HepG2 (cell line): ENCODE measurements at regions of chr18 and their contacts with region 1.

Region 1: GRCh38 chr18:31241900-31242409 is 76.0 kb upstream of the DSG1 start:
- DNase-seq: peak; percentile 98
- ATAC-seq: peak; percentile 86
- H3K4me3 ChIP-seq: no peak overlapping the region
- H3K27ac ChIP-seq: peak overlapping the region; percentile 94
- H3K4me1 ChIP-seq: peaks cover 61% of the 10 kb centered on the region
- H3K27me3 ChIP-seq: no peaks in the 10 kb centered on the region
- CTCF ChIP-seq: peak; percentile 82
- EP300 ChIP-seq: peak; percentile 29 to 94; a peak in 2 of 4 replicates
- POLR2A ChIP-seq: no peak
- RAD21 ChIP-seq: peak; percentile 80

Region 2: DNA sequence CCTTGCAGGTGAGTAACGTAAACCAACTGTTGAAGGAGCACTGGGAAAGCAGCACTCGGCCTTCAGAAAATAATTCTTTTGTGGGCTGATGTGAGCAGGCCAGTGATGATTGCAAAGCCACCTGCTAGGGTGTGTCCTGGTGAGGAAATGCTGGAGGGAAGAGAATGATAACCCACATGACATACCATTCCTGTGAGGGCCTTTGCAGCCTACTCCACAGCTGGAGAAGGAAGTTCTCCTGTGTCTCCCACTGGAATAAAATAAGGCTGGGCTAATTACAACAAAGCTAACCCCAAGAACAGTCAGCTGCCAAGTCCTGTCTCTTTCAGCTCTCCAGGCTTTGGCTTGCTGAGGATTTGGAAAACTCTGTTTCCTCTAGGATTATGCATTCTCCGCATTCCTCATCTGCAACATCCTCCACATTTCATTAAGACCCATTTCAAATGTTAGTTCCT is 59.3 kb after region 1 on chr18:
- CTCF ChIA-PET with region 1: no interaction called
- POLR2A ChIA-PET with region 1: no interaction called
- in situ Hi-C with region 1: no loop called
- intact Hi-C with region 1: no loop called
- DNase-seq: no peak
- ATAC-seq: no peak
- H3K4me3 ChIP-seq: no peak overlapping the region
- H3K27ac ChIP-seq: no peak overlapping the region
- H3K4me1 ChIP-seq: no peaks in the 10 kb centered on the region
- H3K27me3 ChIP-seq: no peaks in the 10 kb centered on the region
- CTCF ChIP-seq: no peak
- EP300 ChIP-seq: no peak
- POLR2A ChIP-seq: no peak
- RAD21 ChIP-seq: no peak

Region 3: DNA sequence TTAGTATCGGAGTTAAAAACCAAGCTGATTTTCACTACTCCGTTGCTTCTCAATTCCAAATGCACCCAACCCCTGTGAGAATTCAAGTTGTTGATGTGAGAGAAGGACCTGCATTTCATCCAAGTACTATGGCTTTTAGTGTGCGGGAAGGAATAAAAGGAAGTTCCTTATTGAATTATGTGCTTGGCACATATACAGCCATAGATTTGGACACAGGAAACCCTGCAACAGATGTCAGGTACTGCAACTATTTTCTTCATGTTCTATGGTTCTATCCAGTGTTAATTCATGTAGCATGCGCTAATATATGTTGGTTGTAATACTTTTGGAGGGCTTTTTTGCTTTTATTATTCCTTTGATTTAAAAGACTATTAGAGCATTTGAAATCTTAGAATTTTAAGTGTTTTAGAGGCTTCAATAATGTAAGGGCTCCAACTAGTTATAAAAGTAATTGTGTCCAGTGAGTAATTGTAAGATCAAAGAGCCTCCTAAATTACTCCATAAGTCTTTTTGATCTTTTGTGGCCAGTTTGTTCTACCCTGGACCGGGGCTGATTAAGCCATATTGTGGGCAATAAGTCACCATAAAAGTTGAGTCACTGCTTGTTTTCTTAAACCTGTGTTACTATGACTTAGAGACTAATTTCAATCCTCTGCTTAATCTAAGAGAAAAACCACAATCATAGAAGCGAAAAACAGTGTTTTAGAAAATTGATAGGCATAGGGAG is 157.5 kb after region 1 on chr18:
- CTCF ChIA-PET with region 1: no interaction called
- POLR2A ChIA-PET with region 1: interaction called, 49 read pairs
- in situ Hi-C with region 1: no loop called
- intact Hi-C with region 1: loop called (anchors 2 kb)
- DNase-seq: peak; percentile 55
- ATAC-seq: no peak
- H3K4me3 ChIP-seq: no peak overlapping the region
- H3K27ac ChIP-seq: peak overlapping the region; percentile 93
- H3K4me1 ChIP-seq: peaks cover 92% of the 10 kb centered on the region
- H3K27me3 ChIP-seq: no peaks in the 10 kb centered on the region
- CTCF ChIP-seq: no peak
- EP300 ChIP-seq: peak in 1 of 2 experiments; percentile 79; a peak in 2 of 4 replicates
- POLR2A ChIP-seq: no peak
- RAD21 ChIP-seq: no peak